Activated CD4-positive, alpha-beta memory T cell treated with anti-CD3 and anti-CD28 coated beads, Interleukin-2, amount 10 ng/mL, durations not matched to agents 7 days and 5 days (primary cell): ENCODE measurements at regions of chr17 and their contacts with region 1.

Region 1: DNA sequence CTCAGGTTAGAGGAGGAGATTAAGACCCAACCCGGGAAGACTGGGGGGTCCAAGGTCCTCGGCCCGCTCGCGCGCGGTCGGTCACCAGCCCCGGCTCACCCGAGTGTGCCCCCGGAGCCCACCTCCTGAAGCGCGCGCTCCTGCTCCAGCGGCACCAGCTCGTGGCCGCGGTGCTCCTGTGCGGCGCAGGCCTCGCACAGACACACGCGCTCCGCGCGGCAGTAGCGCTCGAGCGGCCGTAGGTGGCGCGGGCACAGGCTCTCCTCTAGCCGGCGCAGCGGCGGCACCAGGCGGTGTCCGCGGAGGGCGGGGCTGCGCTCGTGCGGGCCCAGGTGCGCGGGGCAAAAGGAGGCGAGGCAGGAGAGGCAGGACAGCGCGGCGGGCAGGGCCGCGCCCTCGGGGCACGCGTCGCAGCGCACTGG is 618 bp downstream of the TRIM47 start:
- DNase-seq: peak; percentile 82
- H3K4me3 Mint-ChIP-seq: peak overlapping the region; percentile 89
- H3K27ac Mint-ChIP-seq: peak overlapping the region; percentile 93
- H3K4me1 Mint-ChIP-seq: peaks cover 63% of the 10 kb centered on the region
- H3K27me3 Mint-ChIP-seq: peaks cover 14% of the 10 kb centered on the region

Region 2: GRCh38 chr17:75614006-75614405 is 263.8 kb before region 1 on chr17:
- CTCF ChIA-PET with region 1: no interaction called
- POLR2A ChIA-PET with region 1: no interaction called
- DNase-seq: no peak
- H3K4me3 Mint-ChIP-seq: no peak overlapping the region
- H3K27ac Mint-ChIP-seq: no peak overlapping the region
- H3K4me1 Mint-ChIP-seq: no peaks in the 10 kb centered on the region
- H3K27me3 Mint-ChIP-seq: no peaks in the 10 kb centered on the region

Region 3: GRCh38 chr17:75864448-75864871 is 13.3 kb before region 1 on chr17:
- CTCF ChIA-PET with region 1: interaction called, 91 read pairs
- POLR2A ChIA-PET with region 1: interaction called, 221 read pairs
- DNase-seq: peak; percentile 76
- H3K4me3 Mint-ChIP-seq: peak overlapping the region; percentile 43
- H3K27ac Mint-ChIP-seq: peak overlapping the region; percentile 89
- H3K4me1 Mint-ChIP-seq: peaks cover 29% of the 10 kb centered on the region
- H3K27me3 Mint-ChIP-seq: no peaks in the 10 kb centered on the region

Region 4: GRCh38 chr17:75889454-75889853 is 11.7 kb after region 1 on chr17:
- CTCF ChIA-PET with region 1: interaction called, 42 read pairs
- POLR2A ChIA-PET with region 1: interaction called, 151 read pairs
- DNase-seq: no peak
- H3K4me3 Mint-ChIP-seq: no peak overlapping the region
- H3K27ac Mint-ChIP-seq: no peak overlapping the region
- H3K4me1 Mint-ChIP-seq: peaks cover 7% of the 10 kb centered on the region
- H3K27me3 Mint-ChIP-seq: no peaks in the 10 kb centered on the region

Region 5: DNA sequence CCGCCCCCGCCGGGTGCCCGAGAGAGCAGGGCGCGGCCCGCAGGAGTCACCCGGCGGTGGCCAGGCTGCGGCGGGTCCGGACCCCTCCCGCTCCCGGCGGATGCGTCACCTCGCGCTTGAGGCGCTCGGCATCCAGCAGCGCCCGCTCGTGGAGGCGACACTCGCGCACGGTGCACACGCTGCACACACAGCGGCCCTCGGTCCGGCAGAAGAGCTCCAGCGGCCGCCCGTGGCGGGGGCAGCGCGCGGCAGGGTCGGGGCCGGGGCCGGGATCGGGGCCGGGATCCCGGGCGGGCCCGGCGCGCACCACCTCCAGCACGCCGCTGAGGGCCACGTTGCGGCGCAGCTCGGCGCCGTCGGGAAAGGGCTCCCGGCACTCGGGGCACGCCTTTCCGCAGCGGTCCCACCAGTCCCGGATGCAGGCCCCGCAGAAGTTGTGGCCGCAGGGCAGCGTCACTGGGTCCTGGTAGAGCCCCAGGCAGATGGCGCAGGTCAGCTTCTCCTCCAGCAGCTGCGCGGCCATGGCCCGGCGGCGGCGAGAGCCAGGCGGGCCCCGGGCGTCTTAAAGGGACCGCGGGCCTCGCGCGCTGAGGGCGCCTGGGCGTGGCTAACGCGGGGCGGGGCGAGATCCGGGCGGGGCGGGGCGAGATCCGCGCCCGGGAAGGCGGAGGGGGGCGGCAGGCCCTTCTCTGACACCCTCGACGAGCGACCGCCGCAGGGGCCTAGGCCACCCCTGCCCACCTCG is 18.8 kb after region 1 on chr17 and contains the start of gene TRIM65:
- CTCF ChIA-PET with region 1: interaction called, 42 read pairs
- POLR2A ChIA-PET with region 1: interaction called, 151 read pairs
- DNase-seq: peak; percentile 83
- H3K4me3 Mint-ChIP-seq: peak within 1 kb of the TSS; percentile 81
- H3K27ac Mint-ChIP-seq: peak within 1 kb of the TSS; percentile 74
- H3K4me1 Mint-ChIP-seq: peaks cover 24% of the 10 kb centered on the region
- H3K27me3 Mint-ChIP-seq: no peaks in the 10 kb centered on the region
- total RNA-seq, gene TRIM65: 24.9 to 26.1 TPM

Region 6: GRCh38 chr17:75904749-75905521 is 27.2 kb after region 1 on chr17 and contains the start of gene MRPL38:
- CTCF ChIA-PET with region 1: interaction called, 42 read pairs
- POLR2A ChIA-PET with region 1: interaction called, 15 read pairs
- DNase-seq: peak; percentile 98
- H3K4me3 Mint-ChIP-seq: peak within 1 kb of the TSS; percentile 87
- H3K27ac Mint-ChIP-seq: peak within 1 kb of the TSS; percentile 76
- H3K4me1 Mint-ChIP-seq: peaks cover 31% of the 10 kb centered on the region
- H3K27me3 Mint-ChIP-seq: no peaks in the 10 kb centered on the region
- total RNA-seq, gene MRPL38: 79.9 to 85.0 TPM